GM12878 (cell line): ENCODE measurements at regions of chr17 and their contacts with region 1.

Region 1: DNA sequence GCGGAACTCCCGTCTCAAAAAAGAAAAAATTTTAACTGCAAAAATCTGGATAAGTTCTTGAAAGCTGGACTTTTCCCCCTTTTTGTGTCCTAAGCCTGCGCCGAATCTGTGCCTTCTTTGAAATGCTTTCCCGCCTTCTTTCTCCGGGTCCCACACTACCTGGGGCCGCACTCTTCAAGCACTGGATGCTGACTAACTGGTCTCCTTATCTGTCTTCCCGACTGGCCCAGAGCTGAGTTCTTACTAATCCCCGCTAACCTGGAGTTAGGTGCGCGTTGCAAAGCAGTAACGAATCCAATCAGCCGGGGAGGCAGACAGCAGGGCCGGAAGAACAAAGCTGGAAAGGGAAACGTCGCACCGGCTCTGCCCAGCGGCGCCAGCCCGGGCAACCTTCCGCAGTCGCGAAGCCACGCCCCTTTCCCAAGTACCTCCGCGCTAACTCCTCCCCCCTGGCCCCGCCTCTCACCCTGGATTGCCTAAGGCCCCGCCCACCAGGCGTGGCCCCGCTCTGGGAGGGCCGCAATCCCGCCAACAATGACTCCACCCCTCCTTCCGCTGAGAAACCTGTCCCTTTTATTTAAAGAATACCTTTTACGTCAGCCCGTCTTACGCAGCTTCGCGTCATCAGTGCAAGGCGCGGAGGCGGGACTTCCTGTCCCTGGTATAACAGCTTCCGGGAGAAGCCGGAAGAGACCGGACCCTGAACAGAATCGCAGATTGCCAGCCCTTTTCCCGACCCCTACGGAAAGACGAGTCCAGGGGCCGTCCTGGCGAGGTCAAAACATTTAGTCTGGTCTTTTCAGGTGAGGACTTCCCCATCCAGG is at the start of gene TMUB2:
- DNase-seq: peak; percentile 98
- ATAC-seq: peak; percentile 88
- H3K4me3 ChIP-seq: peak within 1 kb of the TSS; percentile 97
- H3K27ac ChIP-seq: peak within 1 kb of the TSS; percentile 97
- H3K4me1 ChIP-seq: peaks cover 4% of the 10 kb centered on the region
- H3K27me3 ChIP-seq: no peaks in the 10 kb centered on the region
- CTCF ChIP-seq: no peak
- EP300 ChIP-seq: no peak
- POLR2A ChIP-seq: peak; percentile 94
- RAD21 ChIP-seq: no peak
- polyA plus RNA-seq, gene TMUB2: 4.3 to 5.9 TPM

Region 2: GRCh38 chr17:44123356-44124117 is 63.0 kb before region 1 on chr17 and contains the start of gene HDAC5:
- CTCF ChIA-PET with region 1: no interaction called
- POLR2A ChIA-PET with region 1: interaction called, 10 read pairs
- RAD21 ChIA-PET with region 1: interaction called, 3 read pairs
- SMC1A ChIA-PET with region 1: interaction called, 4 read pairs
- in situ Hi-C with region 1: no loop called
- intact Hi-C with region 1: no loop called
- DNase-seq: peak; percentile 73
- ATAC-seq: peak; percentile 97
- H3K4me3 ChIP-seq: peak within 1 kb of the TSS; percentile 95
- H3K27ac ChIP-seq: peak within 1 kb of the TSS; percentile 59
- H3K4me1 ChIP-seq: peaks cover 8% of the 10 kb centered on the region; the same call in 1 of the 2 replicates
- H3K27me3 ChIP-seq: no peaks in the 10 kb centered on the region
- CTCF ChIP-seq: peak; percentile 53 to 69 (median 67)
- EP300 ChIP-seq: no peak
- POLR2A ChIP-seq: peak; percentile 71
- RAD21 ChIP-seq: peak; percentile 38; the same call in 1 of the 2 replicates
- polyA plus RNA-seq, gene HDAC5: 1.1 to 2.0 TPM

Region 3: GRCh38 chr17:44141717-44142285 is 44.7 kb before region 1 on chr17 and contains the start of gene HROB:
- CTCF ChIA-PET with region 1: interaction called, 3 read pairs
- POLR2A ChIA-PET with region 1: interaction called, 3 read pairs
- RAD21 ChIA-PET with region 1: interaction called, 3 read pairs
- SMC1A ChIA-PET with region 1: no interaction called
- in situ Hi-C with region 1: no loop called
- intact Hi-C with region 1: loop called (anchors 5 kb)
- DNase-seq: peak; percentile 87
- ATAC-seq: peak; percentile 94
- H3K4me3 ChIP-seq: peak within 1 kb of the TSS; percentile 85
- H3K27ac ChIP-seq: peak within 1 kb of the TSS; percentile 91
- H3K4me1 ChIP-seq: peaks cover 15% of the 10 kb centered on the region
- H3K27me3 ChIP-seq: no peaks in the 10 kb centered on the region
- CTCF ChIP-seq: peak; percentile 92 to 95 (median 94); a peak in 5 of 6 replicates
- EP300 ChIP-seq: no peak
- POLR2A ChIP-seq: peak; percentile 49; the same call in 1 of the 2 replicates
- RAD21 ChIP-seq: peak; percentile 54
- polyA plus RNA-seq, gene HROB: 4.0 to 4.7 TPM

Region 4: DNA sequence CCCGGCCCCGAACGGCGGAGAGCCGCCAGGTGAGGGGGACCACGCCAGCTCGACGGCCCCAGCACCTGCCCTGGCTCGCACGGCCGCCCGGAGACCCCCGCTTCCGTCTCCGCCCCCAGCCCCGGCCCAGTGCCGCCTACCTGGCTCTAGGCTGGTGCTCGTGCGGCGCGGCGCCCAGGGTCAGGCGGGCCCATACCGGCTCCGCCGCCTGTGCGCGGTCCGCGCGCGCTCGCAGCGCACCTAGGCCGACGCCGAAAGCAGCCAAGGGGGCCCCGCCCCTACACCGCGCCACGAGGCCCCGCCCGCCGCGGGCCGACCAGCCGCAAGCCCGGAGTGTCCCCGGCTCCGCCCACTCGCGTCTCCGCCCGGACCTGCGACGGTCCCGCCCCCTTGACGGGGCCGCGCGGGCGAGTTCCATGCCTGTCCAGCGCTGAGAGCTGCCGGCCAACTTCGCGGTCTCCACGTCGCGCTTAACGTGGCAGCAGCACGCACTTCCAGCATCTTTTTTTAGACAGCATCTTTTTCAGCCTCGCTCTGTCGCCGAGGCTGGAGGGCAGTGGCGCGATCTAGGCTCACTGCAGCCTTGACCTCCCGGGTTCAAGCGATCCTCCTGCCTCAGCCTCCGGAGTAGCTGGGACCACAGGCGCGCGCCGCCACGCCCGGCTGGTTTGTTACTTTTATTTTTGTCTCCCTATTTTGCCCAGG is 138.2 kb after region 1 on chr17 and contains the start of gene SLC25A39:
- CTCF ChIA-PET with region 1: interaction called, 9 read pairs
- POLR2A ChIA-PET with region 1: interaction called, 11 read pairs
- RAD21 ChIA-PET with region 1: interaction called, 9 read pairs
- SMC1A ChIA-PET with region 1: no interaction called
- in situ Hi-C with region 1: no loop called
- intact Hi-C with region 1: no loop called
- DNase-seq: no peak
- ATAC-seq: peak; percentile 80
- H3K4me3 ChIP-seq: peak within 1 kb of the TSS; percentile 97
- H3K27ac ChIP-seq: peak within 1 kb of the TSS; percentile 96
- H3K4me1 ChIP-seq: peaks cover 8% of the 10 kb centered on the region
- H3K27me3 ChIP-seq: no peaks in the 10 kb centered on the region
- CTCF ChIP-seq: no peak
- EP300 ChIP-seq: no peak
- POLR2A ChIP-seq: peak; percentile 88
- RAD21 ChIP-seq: no peak
- polyA plus RNA-seq, gene SLC25A39: 3.5 to 7.5 TPM